ENCODE measurements at regions of chr5 and their contacts with region 1.

Region 1: GRCh38 chr5:23450187-23450586 is 57.2 kb upstream of the PRDM9 start:
- DNase-seq: no peak
- ATAC-seq: no peak
- H3K4me3 ChIP-seq: no peak overlapping the region
- H3K4me3 Mint-ChIP-seq: no peak overlapping the region
- H3K27ac ChIP-seq: no peak overlapping the region
- H3K27ac Mint-ChIP-seq: no peak overlapping the region
- H3K4me1 ChIP-seq: no peaks in the 10 kb centered on the region
- H3K4me1 Mint-ChIP-seq: no peaks in the 10 kb centered on the region
- H3K27me3 ChIP-seq: no peaks in the 10 kb centered on the region
- H3K27me3 Mint-ChIP-seq: no peaks in the 10 kb centered on the region
- CTCF ChIP-seq: no peak

Region 2: GRCh38 chr5:24714746-24715145 is 1264.6 kb after region 1 on chr5:
- CTCF ChIA-PET with region 1: no interaction called
- POLR2A ChIA-PET with region 1: no interaction called
- intact Hi-C with region 1: loop called in 1 of 2 experiments (anchors 10 kb)
- DNase-seq: no peak
- ATAC-seq: no peak
- H3K4me3 ChIP-seq: no peak overlapping the region
- H3K4me3 Mint-ChIP-seq: no peak overlapping the region
- H3K27ac ChIP-seq: no peak overlapping the region
- H3K27ac Mint-ChIP-seq: no peak overlapping the region
- H3K4me1 ChIP-seq: no peaks in the 10 kb centered on the region
- H3K4me1 Mint-ChIP-seq: no peaks in the 10 kb centered on the region
- H3K27me3 ChIP-seq: no peaks in the 10 kb centered on the region
- H3K27me3 Mint-ChIP-seq: no peaks in the 10 kb centered on the region
- CTCF ChIP-seq: no peak